ENCODE measurements at regions of chr17 and their contacts with region 1.

Region 1: GRCh38 chr17:45135192-45135977 is at the start of gene ACBD4:
- DNase-seq: peak; percentile 94 to 99 (median 98)
- ATAC-seq: peak; percentile 88
- H3K4me3 ChIP-seq: peak within 1 kb of the TSS; percentile 87
- H3K4me3 Mint-ChIP-seq: peak within 1 kb of the TSS; percentile 94
- H3K27ac ChIP-seq: peak within 1 kb of the TSS; percentile 43 to 58
- H3K27ac Mint-ChIP-seq: peak within 1 kb of the TSS; percentile 85
- H3K4me1 ChIP-seq: peaks cover 37% of the 10 kb centered on the region
- H3K4me1 Mint-ChIP-seq: peaks cover 26% of the 10 kb centered on the region
- H3K27me3 ChIP-seq: no peaks in the 10 kb centered on the region
- H3K27me3 Mint-ChIP-seq: no peaks in the 10 kb centered on the region
- CTCF ChIP-seq: peak; percentile 100
- total RNA-seq, gene ACBD4: 24.8 to 26.3 TPM

Region 2: DNA sequence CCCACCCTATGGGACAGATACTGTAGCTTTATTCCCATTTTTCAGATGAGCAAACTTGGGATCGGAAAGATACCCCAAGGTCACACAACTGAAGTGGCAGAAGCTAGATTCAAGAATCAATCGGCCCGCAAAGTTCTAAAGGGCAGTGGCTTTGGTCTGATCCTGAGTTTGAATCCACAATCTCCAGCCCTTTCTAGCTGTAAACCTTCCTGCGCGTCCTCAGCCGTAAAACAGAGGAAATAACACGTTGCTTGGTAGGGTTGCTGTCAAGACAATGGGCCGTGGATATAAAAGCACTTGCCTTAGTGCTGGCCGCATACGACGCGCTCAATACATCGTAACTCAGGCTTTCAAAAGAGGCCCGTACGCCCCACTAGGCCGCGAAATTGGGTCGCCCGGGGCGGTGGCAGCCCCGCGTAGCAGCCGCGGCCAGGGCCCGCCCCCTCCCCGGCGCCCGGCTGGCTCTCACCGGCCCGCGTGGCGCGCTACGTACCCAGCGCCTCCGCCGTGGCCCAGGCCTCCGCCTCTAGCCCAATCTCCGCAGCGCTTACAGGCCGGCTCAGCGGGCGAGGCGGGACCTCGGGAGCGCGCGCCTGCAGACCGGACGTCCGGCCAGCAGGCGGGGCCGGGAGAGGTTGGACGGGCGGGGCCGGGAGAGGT is 84.2 kb before region 1 on chr17 and contains the start of gene DCAKD:
- CTCF ChIA-PET with region 1: interaction called, 4 read pairs
- POLR2A ChIA-PET with region 1: no interaction called
- intact Hi-C with region 1: loop called in 1 of 2 experiments (anchors 1 kb)
- DNase-seq: peak; percentile 75 to 98 (median 86)
- ATAC-seq: peak; percentile 85
- H3K4me3 ChIP-seq: peak within 1 kb of the TSS; percentile 82
- H3K4me3 Mint-ChIP-seq: peak within 1 kb of the TSS; percentile 88
- H3K27ac ChIP-seq: peak within 1 kb of the TSS; percentile 83 to 96
- H3K27ac Mint-ChIP-seq: peak within 1 kb of the TSS; percentile 96
- H3K4me1 ChIP-seq: peaks cover 43% of the 10 kb centered on the region
- H3K4me1 Mint-ChIP-seq: peaks cover 33% of the 10 kb centered on the region
- H3K27me3 ChIP-seq: no peaks in the 10 kb centered on the region
- H3K27me3 Mint-ChIP-seq: no peaks in the 10 kb centered on the region
- CTCF ChIP-seq: no peak
- total RNA-seq, gene DCAKD: 11.6 to 12.2 TPM

Region 3: GRCh38 chr17:45161019-45161825 is 25.8 kb after region 1 on chr17:
- CTCF ChIA-PET with region 1: interaction called, 68 read pairs
- POLR2A ChIA-PET with region 1: interaction called, 35 read pairs
- intact Hi-C with region 1: loop called in 1 of 2 experiments (anchors 1 kb)
- DNase-seq: peak; percentile 94 to 100 (median 98)
- ATAC-seq: peak; percentile 93
- H3K4me3 ChIP-seq: peak overlapping the region; percentile 97
- H3K4me3 Mint-ChIP-seq: peak overlapping the region; percentile 93
- H3K27ac ChIP-seq: peak overlapping the region; percentile 98 to 99
- H3K27ac Mint-ChIP-seq: peak overlapping the region; percentile 94
- H3K4me1 ChIP-seq: peaks cover 26% of the 10 kb centered on the region
- H3K4me1 Mint-ChIP-seq: peaks cover 37% of the 10 kb centered on the region
- H3K27me3 ChIP-seq: no peaks in the 10 kb centered on the region
- H3K27me3 Mint-ChIP-seq: no peaks in the 10 kb centered on the region
- CTCF ChIP-seq: no peak

Region 4: DNA sequence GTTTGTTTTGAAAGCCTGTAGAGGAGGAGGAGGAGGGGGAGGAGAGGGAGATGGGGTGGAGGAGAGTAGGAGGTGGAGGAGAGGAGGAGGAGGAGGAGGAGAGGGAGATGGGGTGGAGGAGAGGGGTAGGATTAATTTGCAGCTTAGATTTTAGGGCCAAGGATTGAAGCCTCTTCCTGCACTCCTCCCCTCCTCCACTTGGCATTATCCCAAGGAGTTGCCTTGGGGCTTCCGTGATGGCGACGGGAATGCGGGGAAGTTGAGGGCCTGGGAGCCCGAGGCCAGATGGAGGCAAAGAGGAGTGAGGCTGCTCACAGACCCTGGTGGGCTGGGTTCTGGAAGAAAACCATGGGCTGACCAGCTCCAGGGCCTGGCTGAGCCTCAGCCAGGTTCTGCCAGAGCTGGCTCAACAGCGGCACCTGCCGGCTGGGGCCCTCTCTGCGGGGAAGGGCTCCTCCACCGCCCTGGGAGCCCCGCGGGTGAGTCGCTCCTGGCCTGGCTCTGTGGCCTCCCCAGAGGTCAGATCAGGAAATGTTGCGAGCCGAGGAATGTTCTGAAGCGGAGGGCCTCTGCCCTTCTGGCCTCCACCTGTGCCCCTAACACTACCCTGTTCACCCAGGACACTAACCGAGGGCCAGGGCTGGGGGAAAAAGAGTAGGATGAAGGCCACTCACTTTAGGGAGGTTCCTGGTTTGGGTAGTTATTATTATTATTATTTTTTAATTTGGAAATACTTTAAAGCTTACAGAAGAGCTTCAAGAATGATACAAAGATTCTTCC is 62.4 kb after region 1 on chr17:
- CTCF ChIA-PET with region 1: interaction called, 78 read pairs
- POLR2A ChIA-PET with region 1: interaction called, 28 read pairs
- intact Hi-C with region 1: loop called (anchors 1 kb)
- DNase-seq: peak; percentile 72 to 91 (median 84)
- ATAC-seq: peak; percentile 100
- H3K4me3 ChIP-seq: no peak overlapping the region
- H3K4me3 Mint-ChIP-seq: no peak overlapping the region
- H3K27ac ChIP-seq: no peak overlapping the region
- H3K27ac Mint-ChIP-seq: no peak overlapping the region
- H3K4me1 ChIP-seq: peaks cover 8% of the 10 kb centered on the region
- H3K4me1 Mint-ChIP-seq: peaks cover 3% of the 10 kb centered on the region
- H3K27me3 ChIP-seq: no peaks in the 10 kb centered on the region
- H3K27me3 Mint-ChIP-seq: no peaks in the 10 kb centered on the region
- CTCF ChIP-seq: peak; percentile 92

Region 5: DNA sequence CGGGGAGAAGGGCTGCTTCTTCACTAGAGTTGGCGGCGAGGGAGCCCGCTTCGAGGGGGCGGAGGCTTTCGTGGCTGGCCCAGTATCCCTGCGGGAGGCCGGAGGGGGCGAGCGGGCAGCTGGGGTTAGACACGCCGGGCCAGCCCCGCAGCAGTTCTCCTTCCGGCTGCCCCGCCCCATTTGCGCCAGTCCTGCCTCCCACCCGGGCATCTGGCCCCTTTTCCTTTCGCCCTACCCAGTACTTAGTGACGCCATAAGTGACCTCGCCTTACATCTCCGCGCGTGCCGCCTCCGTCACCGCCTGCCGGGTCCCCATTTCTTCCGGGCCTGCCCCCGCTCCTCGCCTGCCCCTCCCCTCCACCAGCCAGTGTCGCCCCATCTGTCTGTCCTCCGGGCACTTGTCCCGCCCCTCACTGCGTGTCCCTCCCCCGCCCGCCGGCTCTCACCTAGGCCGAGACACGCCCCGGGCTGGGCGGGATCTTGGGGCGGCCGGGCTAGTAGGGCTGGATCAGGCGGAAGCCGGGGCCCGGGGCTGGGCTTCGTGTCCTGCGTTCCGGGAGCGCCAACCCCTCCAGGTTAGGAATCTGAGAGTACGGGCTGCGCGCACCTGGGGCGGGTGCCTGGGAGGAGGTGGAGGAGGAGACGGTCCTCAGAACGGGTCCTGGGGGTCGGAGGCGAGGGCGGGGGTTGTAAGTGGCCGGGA is 112.2 kb after region 1 on chr17:
- CTCF ChIA-PET with region 1: interaction called, 15 read pairs
- POLR2A ChIA-PET with region 1: interaction called, 5 read pairs
- intact Hi-C with region 1: no loop called
- DNase-seq: peak; percentile 88 to 99 (median 96)
- ATAC-seq: peak; percentile 74
- H3K4me3 ChIP-seq: peak overlapping the region; percentile 75
- H3K4me3 Mint-ChIP-seq: peak overlapping the region; percentile 93
- H3K27ac ChIP-seq: peak overlapping the region; percentile 90 to 96
- H3K27ac Mint-ChIP-seq: peak overlapping the region; percentile 100
- H3K4me1 ChIP-seq: peaks cover 87% of the 10 kb centered on the region
- H3K4me1 Mint-ChIP-seq: peaks cover 68% of the 10 kb centered on the region
- H3K27me3 ChIP-seq: no peaks in the 10 kb centered on the region
- H3K27me3 Mint-ChIP-seq: no peaks in the 10 kb centered on the region
- CTCF ChIP-seq: no peak

Region 6: DNA sequence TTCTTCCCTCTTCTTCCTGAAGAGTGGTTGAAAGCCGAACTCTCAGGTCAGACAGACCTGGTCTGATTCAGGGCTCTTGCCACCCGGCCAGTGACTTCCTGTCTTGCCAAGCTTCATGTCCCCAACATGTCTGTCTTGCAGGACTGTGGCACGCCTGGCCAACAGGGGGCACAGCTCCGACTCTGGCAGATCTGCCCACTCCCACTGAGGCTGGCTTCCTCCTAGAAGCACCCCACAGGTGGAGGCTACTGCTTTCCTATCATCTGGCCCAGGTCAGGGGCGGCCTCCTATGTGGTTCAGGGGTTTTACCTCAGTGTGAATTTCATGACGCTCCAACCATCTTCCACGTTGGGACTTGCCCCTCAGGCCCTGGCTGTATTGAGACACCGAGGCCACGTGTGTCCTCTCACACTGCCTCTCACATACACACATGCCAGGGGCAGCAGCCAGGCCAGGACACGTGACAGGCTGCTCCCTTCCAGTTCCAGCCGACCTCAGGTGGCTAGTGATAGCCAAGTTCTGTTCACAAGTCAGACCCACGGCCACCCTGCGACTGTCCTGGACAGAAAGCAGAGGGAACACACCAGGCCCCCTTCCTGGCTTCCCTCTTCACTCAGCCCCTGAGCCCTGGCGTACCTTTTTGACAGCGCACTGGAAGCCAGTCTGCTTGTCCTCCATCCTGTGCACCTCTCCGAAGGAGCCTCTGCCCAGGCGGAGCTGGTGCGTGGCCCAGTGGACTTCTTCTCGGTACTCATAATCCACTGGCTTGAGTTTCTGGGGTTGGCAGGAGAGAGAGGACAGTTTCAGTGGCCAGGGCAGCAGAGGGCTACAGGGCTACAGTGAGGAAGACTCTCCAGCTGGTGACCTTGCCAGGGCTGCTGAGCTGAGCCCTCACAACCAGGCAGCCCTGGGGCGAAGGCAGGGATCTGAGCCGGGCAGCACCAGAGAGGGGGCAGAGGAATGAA is 149.1 kb after region 1 on chr17:
- CTCF ChIA-PET with region 1: no interaction called
- POLR2A ChIA-PET with region 1: no interaction called
- intact Hi-C with region 1: no loop called
- DNase-seq: peak in 12 of 14 experiments; percentile 14 to 64 (median 44)
- ATAC-seq: no peak
- H3K4me3 ChIP-seq: no peak overlapping the region
- H3K4me3 Mint-ChIP-seq: no peak overlapping the region
- H3K27ac ChIP-seq: no peak overlapping the region
- H3K27ac Mint-ChIP-seq: peak overlapping the region; percentile 49
- H3K4me1 ChIP-seq: peaks cover 4% of the 10 kb centered on the region
- H3K4me1 Mint-ChIP-seq: no peaks in the 10 kb centered on the region
- H3K27me3 ChIP-seq: no peaks in the 10 kb centered on the region
- H3K27me3 Mint-ChIP-seq: no peaks in the 10 kb centered on the region
- CTCF ChIP-seq: no peak

Region 7: GRCh38 chr17:45353043-45353442 is 217.7 kb after region 1 on chr17:
- CTCF ChIA-PET with region 1: no interaction called
- POLR2A ChIA-PET with region 1: no interaction called
- intact Hi-C with region 1: no loop called
- DNase-seq: peak in 5 of 14 experiments; percentile 3 to 72 (median 25)
- ATAC-seq: no peak
- H3K4me3 ChIP-seq: no peak overlapping the region
- H3K4me3 Mint-ChIP-seq: no peak overlapping the region
- H3K27ac ChIP-seq: no peak overlapping the region
- H3K27ac Mint-ChIP-seq: no peak overlapping the region
- H3K4me1 ChIP-seq: peaks cover 4% of the 10 kb centered on the region
- H3K4me1 Mint-ChIP-seq: no peaks in the 10 kb centered on the region
- H3K27me3 ChIP-seq: no peaks in the 10 kb centered on the region
- H3K27me3 Mint-ChIP-seq: no peaks in the 10 kb centered on the region
- CTCF ChIP-seq: no peak

Measured in CD4-positive, alpha-beta T cell (primary cell).